Activated CD4-positive, alpha-beta T cell treated with anti-CD3 and anti-CD28 coated beads, Interleukin-2, amount 10 ng/mL, durations not matched to agents 24 days and 14 days (primary cell): ENCODE measurements at regions of chr4 and their contacts with region 1.

Region 1: DNA sequence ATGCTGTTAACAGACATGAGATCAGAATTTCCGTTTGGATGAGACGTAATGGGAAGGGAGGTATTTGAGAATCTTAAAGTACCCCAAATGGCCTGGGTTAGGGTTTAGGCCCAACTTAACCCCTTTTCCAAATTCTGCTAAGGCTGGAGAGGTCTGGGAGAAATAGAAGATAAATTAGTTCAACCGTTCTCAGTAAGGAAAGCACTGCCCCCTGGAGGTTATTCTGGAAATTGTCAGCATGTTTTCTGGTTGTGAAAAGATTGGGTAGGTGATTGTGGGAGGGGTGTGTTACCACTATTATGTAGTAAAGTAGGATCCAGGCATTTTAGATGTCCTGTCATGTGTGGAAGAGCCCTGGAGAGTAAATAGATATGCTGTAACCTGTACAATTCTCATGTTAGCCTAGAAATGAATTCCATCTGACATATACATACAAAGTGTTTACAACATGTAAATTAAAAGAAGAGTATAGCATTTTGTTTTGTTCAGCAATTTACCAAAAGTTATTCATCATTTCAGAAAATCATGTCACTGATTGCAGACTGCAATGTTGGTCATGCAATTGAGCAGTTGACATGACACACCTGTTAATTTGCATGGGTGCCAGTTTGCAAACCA is 26.8 kb upstream of the GRXCR1 start:
- DNase-seq: peak; percentile 86
- H3K4me3 Mint-ChIP-seq: no peak overlapping the region
- H3K27ac Mint-ChIP-seq: no peak overlapping the region
- H3K4me1 Mint-ChIP-seq: no peaks in the 10 kb centered on the region
- H3K27me3 Mint-ChIP-seq: peaks cover 10% of the 10 kb centered on the region

Region 2: GRCh38 chr4:42282081-42282901 is 583.4 kb before region 1 on chr4:
- intact Hi-C with region 1: loop called (anchors 2 kb)
- DNase-seq: peak; percentile 84
- H3K4me3 Mint-ChIP-seq: no peak overlapping the region
- H3K27ac Mint-ChIP-seq: no peak overlapping the region
- H3K4me1 Mint-ChIP-seq: peaks cover 2% of the 10 kb centered on the region
- H3K27me3 Mint-ChIP-seq: no peaks in the 10 kb centered on the region

Region 3: DNA sequence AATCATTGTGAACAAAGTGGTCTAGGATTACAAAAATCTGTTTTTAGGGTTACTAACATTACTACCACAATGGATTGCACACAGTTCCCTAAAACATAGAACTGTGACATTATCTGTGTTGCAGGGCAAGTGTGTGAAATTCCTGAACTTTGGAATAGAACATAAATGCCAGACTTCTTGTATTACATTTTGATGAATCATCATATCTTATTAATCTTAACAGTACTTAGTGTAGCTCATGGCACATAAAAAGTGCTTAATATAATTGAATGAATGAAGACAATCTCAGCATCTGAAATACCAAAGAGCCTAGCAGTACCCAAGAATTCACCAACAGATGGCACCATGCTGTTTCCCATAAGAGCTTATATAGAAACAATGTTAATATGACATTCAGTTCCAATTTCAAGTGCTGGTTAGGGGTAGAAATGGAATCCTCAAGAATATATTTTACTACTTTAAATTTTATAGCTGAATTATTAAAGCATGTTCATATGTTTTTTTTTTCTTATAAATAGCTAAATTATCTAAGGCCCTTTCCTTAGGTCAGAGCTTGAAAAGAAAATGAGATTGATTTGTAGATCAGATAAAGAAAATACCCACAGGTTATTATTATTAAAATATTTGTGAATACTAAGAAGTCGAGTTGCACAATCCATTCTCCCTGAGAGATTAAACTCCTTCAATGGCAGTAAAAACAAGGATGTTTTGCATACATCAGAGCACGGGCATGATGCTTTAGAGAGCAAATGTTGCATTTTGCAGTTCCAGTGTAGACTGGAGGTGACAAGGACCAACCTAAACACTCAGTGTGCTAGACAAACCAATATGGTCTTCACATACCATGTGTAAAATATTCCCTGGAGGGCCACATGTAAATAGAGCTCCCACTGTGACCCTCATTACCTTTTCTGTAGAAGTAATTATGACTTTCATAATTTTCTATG is 494.1 kb before region 1 on chr4:
- intact Hi-C with region 1: loop called (anchors 5 kb)
- DNase-seq: peak; percentile 59
- H3K4me3 Mint-ChIP-seq: no peak overlapping the region
- H3K27ac Mint-ChIP-seq: no peak overlapping the region
- H3K4me1 Mint-ChIP-seq: no peaks in the 10 kb centered on the region
- H3K27me3 Mint-ChIP-seq: peaks cover 7% of the 10 kb centered on the region

Region 4: GRCh38 chr4:42568610-42569207 is 297.0 kb before region 1 on chr4:
- intact Hi-C with region 1: loop called (anchors 1 kb)
- DNase-seq: peak; percentile 89
- H3K4me3 Mint-ChIP-seq: no peak overlapping the region
- H3K27ac Mint-ChIP-seq: no peak overlapping the region
- H3K4me1 Mint-ChIP-seq: no peaks in the 10 kb centered on the region
- H3K27me3 Mint-ChIP-seq: no peaks in the 10 kb centered on the region

Region 5: GRCh38 chr4:42881253-42881652 is 15.6 kb after region 1 on chr4:
- intact Hi-C with region 1: no loop called
- DNase-seq: no peak
- H3K4me3 Mint-ChIP-seq: no peak overlapping the region
- H3K27ac Mint-ChIP-seq: no peak overlapping the region
- H3K4me1 Mint-ChIP-seq: no peaks in the 10 kb centered on the region
- H3K27me3 Mint-ChIP-seq: peaks cover 6% of the 10 kb centered on the region